H1 (cell line): ENCODE measurements at regions of chr3 and their contacts with region 1.

Region 1: DNA sequence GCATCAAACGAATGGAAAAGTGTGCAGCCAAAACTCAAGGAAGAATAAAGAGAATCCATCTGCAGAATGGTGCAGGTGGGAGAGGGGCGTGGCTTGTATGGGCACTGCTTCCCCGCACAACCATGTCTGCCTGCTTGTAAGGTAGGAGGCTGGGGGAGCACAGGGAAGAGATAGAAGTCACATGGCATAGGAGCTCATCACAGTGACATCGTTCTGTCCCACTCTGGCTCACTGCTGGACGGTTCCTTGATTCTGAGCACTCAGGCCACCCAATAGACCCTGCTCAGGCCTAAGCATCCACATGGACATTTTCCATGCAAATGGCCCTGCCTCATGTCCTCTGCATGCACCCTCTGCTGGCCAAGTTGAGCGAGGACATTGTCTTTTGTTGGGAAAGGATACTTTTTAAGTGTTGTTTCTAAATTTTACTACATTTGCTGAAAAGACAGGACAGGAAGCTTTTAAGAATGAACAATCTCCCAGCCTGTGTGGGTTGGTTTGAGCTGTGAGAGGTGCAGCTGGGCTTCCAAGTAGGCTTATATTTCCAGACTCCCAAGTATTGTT is 3.1 kb downstream of the MYLK start:
- DNase-seq: no peak
- H3K4me3 ChIP-seq: no peak overlapping the region
- H3K27ac ChIP-seq: no peak overlapping the region
- H3K4me1 ChIP-seq: peaks cover 0 to 6% (median 3%) of the 10 kb centered on the region in 4 experiments; a peak in 5 of 7 replicates
- H3K27me3 ChIP-seq: peaks cover 0 to 9% (median 4%) of the 10 kb centered on the region in 4 experiments; a peak in 3 of 7 replicates
- CTCF ChIP-seq: peak; percentile 67 to 86 (median 77)
- EP300 ChIP-seq: no peak
- POLR2A ChIP-seq: no peak
- RAD21 ChIP-seq: peak; percentile 52 to 63

Region 2: DNA sequence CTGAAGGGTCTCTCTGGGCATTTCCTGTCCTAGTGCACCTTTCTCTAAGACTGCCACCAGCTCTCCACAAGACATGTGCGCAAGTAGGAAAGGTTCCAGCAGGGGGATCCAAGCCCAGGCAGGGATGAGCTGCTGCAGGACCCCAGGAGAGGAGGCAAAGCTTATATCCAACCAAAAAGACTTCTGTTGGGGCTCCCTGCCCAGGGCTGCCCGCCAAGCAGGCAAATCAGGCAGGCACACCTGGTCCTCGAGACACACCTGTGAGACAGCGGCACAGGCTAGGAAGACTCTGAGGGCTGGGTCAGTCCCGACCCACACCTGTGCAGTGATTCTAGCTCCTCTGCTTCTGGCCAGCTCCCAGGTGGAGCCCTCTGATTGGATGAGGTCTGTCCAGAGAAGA is 77.6 kb before region 1 on chr3:
- CTCF ChIA-PET with region 1: interaction called, 18 read pairs
- POLR2A ChIA-PET with region 1: no interaction called
- DNase-seq: no peak
- H3K4me3 ChIP-seq: no peak overlapping the region
- H3K27ac ChIP-seq: no peak overlapping the region
- H3K4me1 ChIP-seq: peaks cover 0 to 3% (median 0%) of the 10 kb centered on the region in 4 experiments; a peak in 5 of 7 replicates
- H3K27me3 ChIP-seq: no peaks in the 10 kb centered on the region
- CTCF ChIP-seq: peak; percentile 36 to 45 (median 44)
- EP300 ChIP-seq: no peak
- POLR2A ChIP-seq: no peak
- RAD21 ChIP-seq: peak; percentile 43 to 63; a peak in 3 of 4 replicates

Region 3: GRCh38 chr3:123818921-123819429 is 62.1 kb before region 1 on chr3:
- CTCF ChIA-PET with region 1: interaction called, 11 read pairs
- POLR2A ChIA-PET with region 1: interaction called, 5 read pairs
- DNase-seq: no peak
- H3K4me3 ChIP-seq: no peak overlapping the region
- H3K27ac ChIP-seq: no peak overlapping the region
- H3K4me1 ChIP-seq: no peaks in the 10 kb centered on the region
- H3K27me3 ChIP-seq: no peaks in the 10 kb centered on the region
- CTCF ChIP-seq: no peak
- EP300 ChIP-seq: no peak
- POLR2A ChIP-seq: no peak
- RAD21 ChIP-seq: no peak

Region 4: DNA sequence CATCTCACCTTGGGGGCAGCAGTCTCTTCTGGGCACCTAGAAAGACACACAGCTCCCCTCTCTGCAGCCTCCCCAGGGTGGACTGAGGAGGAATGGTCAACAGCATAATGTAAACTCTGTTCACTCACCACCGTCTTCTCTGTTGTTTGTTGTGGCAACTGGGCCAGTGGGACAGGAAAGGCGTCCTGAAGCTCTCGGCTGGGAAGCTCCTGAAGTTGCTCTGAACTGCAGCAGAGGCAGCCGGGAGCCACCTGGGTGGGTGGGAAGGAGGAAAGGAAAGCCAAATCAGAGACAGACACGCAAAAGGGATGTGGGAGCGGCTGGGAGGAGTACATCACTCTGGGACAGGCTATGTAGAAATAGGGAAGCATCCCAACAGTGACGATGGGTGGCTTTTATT is 49.7 kb before region 1 on chr3:
- CTCF ChIA-PET with region 1: interaction called, 10 read pairs
- POLR2A ChIA-PET with region 1: no interaction called
- DNase-seq: no peak
- H3K4me3 ChIP-seq: no peak overlapping the region
- H3K27ac ChIP-seq: no peak overlapping the region
- H3K4me1 ChIP-seq: no peaks in the 10 kb centered on the region
- H3K27me3 ChIP-seq: no peaks in the 10 kb centered on the region
- CTCF ChIP-seq: no peak
- EP300 ChIP-seq: no peak
- POLR2A ChIP-seq: no peak
- RAD21 ChIP-seq: no peak

Region 5: GRCh38 chr3:123870033-123870432 is 11.0 kb before region 1 on chr3:
- CTCF ChIA-PET with region 1: interaction called, 14 read pairs
- POLR2A ChIA-PET with region 1: interaction called, 5 read pairs
- DNase-seq: no peak
- H3K4me3 ChIP-seq: no peak overlapping the region
- H3K27ac ChIP-seq: no peak overlapping the region
- H3K4me1 ChIP-seq: peaks cover 0 to 5% (median 0%) of the 10 kb centered on the region in 4 experiments; a peak in 1 of 7 replicates
- H3K27me3 ChIP-seq: no peaks in the 10 kb centered on the region
- CTCF ChIP-seq: no peak
- EP300 ChIP-seq: no peak
- POLR2A ChIP-seq: no peak
- RAD21 ChIP-seq: no peak

Region 6: DNA sequence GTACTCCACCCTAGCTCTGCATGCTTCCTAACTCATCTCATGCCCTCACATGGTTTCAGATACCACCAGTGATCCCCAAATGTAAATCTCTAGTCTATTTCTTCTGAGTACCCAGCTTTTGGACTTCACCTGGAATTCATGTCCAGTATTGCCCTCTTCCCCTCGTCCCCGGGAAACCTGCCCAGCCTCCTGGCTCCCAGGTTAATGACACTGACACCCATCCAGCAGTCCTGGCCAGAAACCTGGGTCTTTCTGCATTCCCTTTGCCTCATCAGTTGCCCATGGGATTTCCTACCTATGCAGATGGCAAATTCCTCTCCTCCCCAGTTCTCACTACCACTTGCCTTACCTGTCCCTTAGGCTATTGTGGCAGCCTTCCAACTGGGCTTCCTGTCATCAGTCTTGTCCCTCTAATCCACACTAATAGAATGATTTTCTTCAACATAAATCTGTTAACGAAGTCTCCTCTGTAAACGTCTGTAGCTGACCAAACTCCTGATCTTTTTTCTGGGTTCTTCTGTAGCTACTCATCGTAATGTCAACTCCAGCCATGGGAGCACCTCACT is 18.3 kb after region 1 on chr3:
- CTCF ChIA-PET with region 1: interaction called, 14 read pairs
- POLR2A ChIA-PET with region 1: no interaction called
- DNase-seq: no peak
- H3K4me3 ChIP-seq: no peak overlapping the region
- H3K27ac ChIP-seq: no peak overlapping the region
- H3K4me1 ChIP-seq: no peaks in the 10 kb centered on the region
- H3K27me3 ChIP-seq: no peaks in the 10 kb centered on the region
- CTCF ChIP-seq: no peak
- EP300 ChIP-seq: no peak
- POLR2A ChIP-seq: no peak
- RAD21 ChIP-seq: no peak

Region 7: GRCh38 chr3:123953735-123954134 is 72.7 kb after region 1 on chr3:
- CTCF ChIA-PET with region 1: no interaction called
- POLR2A ChIA-PET with region 1: no interaction called
- DNase-seq: no peak
- H3K4me3 ChIP-seq: no peak overlapping the region
- H3K27ac ChIP-seq: no peak overlapping the region
- H3K4me1 ChIP-seq: no peaks in the 10 kb centered on the region
- H3K27me3 ChIP-seq: no peaks in the 10 kb centered on the region
- CTCF ChIP-seq: no peak
- EP300 ChIP-seq: no peak
- POLR2A ChIP-seq: no peak
- RAD21 ChIP-seq: no peak